Heart left ventricle (tissue), 16 donors: ENCODE measurements at regions of chr20 and their contacts with region 1.

Region 1: GRCh38 chr20:38221119-38221589 is 39.4 kb downstream of the KIAA1755 start:
- DNase-seq: peak; percentile 53 to 84 (median 73)
- ATAC-seq: peak; percentile 47 to 75 (median 63)
- H3K4me3 ChIP-seq: no peak overlapping the region
- H3K27ac ChIP-seq: no peak overlapping the region
- H3K4me1 ChIP-seq: peaks cover 0 to 16% (median 7%) of the 10 kb centered on the region in 12 donors
- H3K27me3 ChIP-seq: no peaks in the 10 kb centered on the region
- CTCF ChIP-seq: peak; percentile 85 to 95 (median 90)
- POLR2A ChIP-seq: no peak

Region 2: DNA sequence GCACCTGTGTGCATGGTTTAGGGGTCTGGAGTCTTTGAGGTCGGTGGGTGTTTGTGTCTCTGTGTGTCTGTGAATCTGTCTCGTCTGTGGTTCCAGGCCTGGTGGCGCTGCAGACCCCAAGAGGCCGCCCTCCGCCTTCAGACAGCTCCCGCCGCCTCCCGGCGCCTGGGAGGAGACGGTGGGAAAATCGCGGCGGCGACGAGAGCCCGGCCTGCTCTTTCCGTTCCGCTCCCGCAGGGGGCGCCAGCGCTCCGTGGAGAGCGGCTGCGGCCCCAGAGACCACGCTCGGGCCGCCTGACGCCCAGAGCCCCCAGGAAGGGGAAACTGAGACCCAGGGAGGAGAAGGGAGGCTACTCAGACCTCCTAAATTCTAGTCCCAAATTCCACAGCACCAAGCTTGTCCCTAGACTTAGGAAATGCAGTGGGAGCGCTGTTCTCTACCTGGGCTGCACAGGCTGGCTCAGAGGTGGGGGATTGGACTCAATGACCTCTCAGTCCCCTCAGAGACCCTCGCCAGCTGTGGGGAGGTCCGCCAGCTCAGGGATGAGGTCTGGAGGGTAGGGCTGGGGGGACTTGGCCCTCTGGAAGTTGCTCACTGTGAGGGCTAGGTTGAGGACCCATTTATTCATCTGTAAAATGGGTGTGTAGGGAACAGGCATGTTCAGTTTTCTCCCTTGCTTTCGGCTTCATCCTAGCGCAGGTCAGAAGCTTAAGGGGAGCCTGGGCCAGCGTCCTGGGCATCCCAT is 656.6 kb before region 1 on chr20:
- intact Hi-C with region 1: loop called in 8 of 10 experiments (anchors 1 to 10 kb)
- DNase-seq: peak in 4 of 5 donors; percentile 24 to 69 (median 35)
- ATAC-seq: peak in 3 of 4 donors; percentile 65 to 80 (median 71)
- H3K4me3 ChIP-seq: no peak overlapping the region
- H3K27ac ChIP-seq: no peak overlapping the region
- H3K4me1 ChIP-seq: peaks cover 0 to 8% (median 2%) of the 10 kb centered on the region in 12 donors
- H3K27me3 ChIP-seq: peaks cover 3 to 61% (median 35%) of the 10 kb centered on the region in 9 donors
- CTCF ChIP-seq: peak; percentile 80 to 95 (median 92)
- POLR2A ChIP-seq: no peak

Region 3: GRCh38 chr20:37758332-37758731 is 462.8 kb before region 1 on chr20:
- intact Hi-C with region 1: loop called in 5 of 10 experiments (anchors 10 kb)
- DNase-seq: no peak
- ATAC-seq: peak in 3 of 4 donors; percentile 10 to 60 (median 33)
- H3K4me3 ChIP-seq: no peak overlapping the region
- H3K27ac ChIP-seq: no peak overlapping the region
- H3K4me1 ChIP-seq: peaks cover 0 to 4% (median 0%) of the 10 kb centered on the region in 12 donors
- H3K27me3 ChIP-seq: no peaks in the 10 kb centered on the region
- CTCF ChIP-seq: peak in 1 of 12 donors; percentile 11
- POLR2A ChIP-seq: no peak

Region 4: DNA sequence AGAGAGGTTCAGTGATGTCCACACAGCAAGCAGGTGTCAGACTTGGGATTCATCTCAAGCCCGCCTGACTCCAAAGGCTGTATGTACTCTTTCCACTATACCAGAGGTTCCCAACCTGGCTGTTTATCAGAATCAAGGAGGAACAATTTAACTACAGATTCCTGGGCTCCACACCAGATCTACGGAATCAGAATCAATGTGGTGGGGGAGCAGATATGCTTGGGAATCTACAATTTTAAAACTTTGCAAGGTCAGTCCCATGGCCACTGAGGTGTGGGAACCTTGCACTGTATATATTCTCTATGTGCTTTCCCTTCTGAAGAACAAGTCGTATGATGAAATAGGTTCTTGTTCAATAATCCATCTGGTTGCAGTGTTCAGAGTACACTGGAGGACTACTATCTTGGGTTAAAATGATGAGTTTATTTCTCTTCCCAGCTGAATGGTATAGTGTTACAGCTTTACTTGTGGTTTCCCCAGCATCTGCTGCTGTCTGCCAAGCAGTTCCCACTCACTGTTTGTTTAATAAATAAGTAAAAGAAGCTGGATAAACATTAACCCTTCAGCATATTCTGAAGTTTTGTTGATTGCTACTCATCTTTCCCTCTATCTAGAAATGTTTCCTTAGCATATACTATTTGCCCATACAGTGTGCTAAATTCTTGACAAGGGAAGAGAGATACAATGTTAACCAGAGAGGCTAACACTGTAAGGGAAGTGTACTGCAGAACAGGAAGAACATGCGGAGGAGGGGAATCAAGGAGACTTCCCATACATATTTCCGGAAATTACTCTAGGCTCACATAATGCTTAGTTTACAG is 197.8 kb before region 1 on chr20:
- intact Hi-C with region 1: no loop called
- DNase-seq: no peak
- ATAC-seq: peak in 2 of 4 donors; percentile 45 to 49
- H3K4me3 ChIP-seq: no peak overlapping the region
- H3K27ac ChIP-seq: peak overlapping the region in 1 of 12 donors; percentile 77
- H3K4me1 ChIP-seq: peaks cover 0 to 23% (median 2%) of the 10 kb centered on the region in 12 donors
- H3K27me3 ChIP-seq: no peaks in the 10 kb centered on the region
- CTCF ChIP-seq: no peak
- POLR2A ChIP-seq: no peak

Region 5: DNA sequence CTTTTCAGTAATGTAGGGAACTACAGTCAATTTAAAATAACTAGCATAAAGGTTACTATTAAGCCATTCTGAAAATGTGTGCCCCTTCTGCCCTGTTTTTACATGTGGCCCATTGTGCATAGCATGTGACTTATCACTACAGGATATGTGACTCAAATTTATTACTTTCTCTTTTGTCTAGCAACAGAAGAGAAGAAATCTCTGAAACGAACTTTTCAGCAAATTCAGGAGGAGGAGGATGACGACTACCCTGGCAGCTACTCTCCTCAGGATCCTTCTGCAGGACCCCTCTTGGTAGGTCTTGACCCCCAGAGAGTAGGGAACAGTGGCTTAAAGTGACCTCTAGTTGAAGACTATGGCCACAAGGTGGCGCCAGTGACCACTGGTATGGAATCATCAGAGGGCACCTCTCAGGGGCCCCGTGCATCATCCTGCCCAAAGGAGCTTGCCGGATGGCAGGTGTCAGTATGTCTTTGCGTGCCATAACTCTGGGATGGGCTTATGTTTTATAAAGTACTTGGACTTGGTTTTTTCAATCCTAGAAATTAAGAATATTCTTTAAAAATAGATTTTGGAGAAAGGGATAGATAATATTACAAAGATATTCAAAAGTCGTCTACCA is 163.7 kb before region 1 on chr20:
- intact Hi-C with region 1: loop called (anchors 1 to 2 kb)
- DNase-seq: peak; percentile 80 to 93 (median 84)
- ATAC-seq: peak; percentile 70 to 93 (median 90)
- H3K4me3 ChIP-seq: no peak overlapping the region
- H3K27ac ChIP-seq: peak overlapping the region in 3 of 12 donors; percentile 13 to 42 (median 19)
- H3K4me1 ChIP-seq: peaks cover 0 to 31% (median 9%) of the 10 kb centered on the region in 12 donors
- H3K27me3 ChIP-seq: no peaks in the 10 kb centered on the region
- CTCF ChIP-seq: peak; percentile 85 to 96 (median 91)
- POLR2A ChIP-seq: no peak

Region 6: DNA sequence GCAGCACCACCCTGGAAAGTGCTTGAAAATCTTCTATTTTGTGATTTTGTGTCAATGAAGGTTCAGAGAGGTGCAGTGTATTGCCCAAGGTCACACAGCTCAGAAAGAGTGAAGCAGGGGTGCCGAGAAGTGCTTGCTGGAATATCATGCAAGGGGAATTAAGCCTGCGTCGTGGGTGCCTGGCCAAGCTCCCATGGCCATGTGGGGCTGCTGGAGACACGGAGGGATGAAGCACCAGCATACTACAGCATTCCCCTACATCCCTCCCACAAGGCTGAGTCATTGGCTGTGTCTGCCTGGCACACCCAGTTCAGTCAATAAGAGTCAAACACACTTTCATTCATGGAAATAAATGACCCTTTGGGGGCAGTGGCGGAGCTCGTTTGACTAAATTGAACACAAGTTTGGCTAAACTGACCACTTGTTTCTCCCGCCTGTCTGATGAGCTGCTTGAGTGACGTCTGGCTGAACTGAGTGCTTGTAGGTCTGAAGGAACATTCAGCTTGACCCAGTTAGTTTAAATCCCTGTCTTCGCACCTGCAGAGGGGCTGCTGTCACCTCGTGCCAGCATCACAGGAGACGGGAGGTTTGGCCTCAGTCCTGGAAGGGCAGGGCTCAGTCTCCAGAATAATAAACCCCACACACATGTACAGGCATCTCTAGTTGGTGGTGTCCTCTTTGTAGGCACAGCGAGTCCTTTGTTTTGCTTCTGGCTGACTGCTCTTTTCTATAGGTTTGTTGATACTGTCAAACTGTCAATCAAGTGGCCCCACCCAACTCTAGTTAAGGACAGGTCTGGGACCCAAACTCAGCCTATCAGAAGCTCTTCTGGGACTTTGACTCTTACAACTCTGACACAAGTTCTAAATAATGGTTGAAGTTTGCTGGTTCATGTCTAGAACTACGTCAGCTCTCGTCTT is 47.7 kb before region 1 on chr20:
- intact Hi-C with region 1: loop called in 8 of 10 experiments (anchors 2 to 5 kb)
- DNase-seq: peak in 2 of 5 donors; percentile 62 to 79
- ATAC-seq: peak in 3 of 4 donors; percentile 48 to 75 (median 68)
- H3K4me3 ChIP-seq: no peak overlapping the region
- H3K27ac ChIP-seq: no peak overlapping the region
- H3K4me1 ChIP-seq: peaks cover 0 to 41% (median 8%) of the 10 kb centered on the region in 12 donors
- H3K27me3 ChIP-seq: no peaks in the 10 kb centered on the region
- CTCF ChIP-seq: peak in 2 of 12 donors; percentile 14 to 18
- POLR2A ChIP-seq: no peak

Region 7: DNA sequence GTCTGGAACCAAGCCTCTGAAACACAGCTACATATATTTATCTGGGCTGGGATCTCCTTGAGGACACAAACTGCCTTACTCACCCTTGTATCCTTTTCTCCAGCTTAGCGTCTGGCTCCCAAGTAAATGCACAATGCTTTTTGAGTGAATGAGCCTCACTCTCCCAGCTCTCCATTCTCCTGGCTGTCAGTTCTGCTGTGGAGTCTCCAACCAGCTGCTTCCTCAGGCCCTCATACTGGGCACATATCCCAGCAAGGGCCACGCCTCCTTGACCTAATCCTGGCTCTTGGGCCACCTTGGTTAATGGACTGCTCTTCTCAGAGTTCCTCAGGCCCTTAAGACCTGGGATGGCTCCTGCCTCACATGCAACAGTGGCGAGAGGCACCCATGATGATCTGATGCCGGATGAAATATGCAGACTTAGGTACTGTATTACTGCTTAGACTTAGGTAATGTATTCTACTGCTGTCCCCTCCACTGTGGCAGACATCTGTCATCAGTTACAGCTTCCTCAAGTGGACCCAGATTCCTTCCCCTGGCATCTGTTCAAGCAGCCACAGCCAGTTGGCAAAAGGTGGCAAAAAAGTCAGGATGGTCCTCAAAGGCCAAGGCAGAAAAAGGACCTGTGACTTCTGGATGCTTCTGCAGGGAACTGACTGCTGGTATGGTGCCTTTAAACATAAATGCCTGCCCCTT is 197.5 kb after region 1 on chr20:
- intact Hi-C with region 1: loop called in 1 of 10 experiments (anchors 10 kb)
- DNase-seq: peak in 4 of 5 donors; percentile 47 to 76 (median 56)
- ATAC-seq: peak; percentile 72 to 93 (median 88)
- H3K4me3 ChIP-seq: no peak overlapping the region
- H3K27ac ChIP-seq: no peak overlapping the region
- H3K4me1 ChIP-seq: peaks cover 0 to 21% (median 7%) of the 10 kb centered on the region in 12 donors
- H3K27me3 ChIP-seq: no peaks in the 10 kb centered on the region
- CTCF ChIP-seq: no peak
- POLR2A ChIP-seq: no peak